Breast epithelium (tissue), 4 donors: ENCODE measurements at regions of chr11 and their contacts with region 1.

Region 1: GRCh38 chr11:38153985-38154384 is 1555.9 kb upstream of the RAG2 start:
- DNase-seq: no peak
- H3K4me3 ChIP-seq: no peak overlapping the region
- H3K27ac ChIP-seq: no peak overlapping the region
- H3K4me1 ChIP-seq: no peaks in the 10 kb centered on the region
- H3K27me3 ChIP-seq: no peaks in the 10 kb centered on the region
- CTCF ChIP-seq: no peak
- POLR2A ChIP-seq: no peak

Region 2: DNA sequence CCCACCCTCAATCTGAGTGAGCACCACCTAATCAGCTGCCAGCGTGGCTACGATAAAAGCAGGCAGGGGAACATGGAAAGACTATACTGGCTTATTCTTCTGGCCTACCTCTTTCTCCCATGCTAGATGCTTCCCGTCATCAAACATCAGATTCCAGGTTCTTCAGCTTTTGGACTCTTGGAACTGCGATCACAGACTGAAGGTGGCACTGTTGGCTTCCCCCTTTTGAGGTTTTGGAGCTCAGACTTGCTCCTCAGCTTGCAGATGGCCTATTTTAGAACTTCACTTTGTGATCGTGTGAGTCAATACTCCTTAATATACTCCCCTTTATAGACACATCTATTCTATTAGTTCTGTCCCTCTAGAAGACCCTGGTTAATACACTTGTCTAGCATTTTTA is 1012.3 kb before region 1 on chr11:
- intact Hi-C with region 1: loop called (anchors 5 kb)
- DNase-seq: no peak
- H3K4me3 ChIP-seq: no peak overlapping the region
- H3K27ac ChIP-seq: no peak overlapping the region
- H3K4me1 ChIP-seq: no peaks in the 10 kb centered on the region
- H3K27me3 ChIP-seq: no peaks in the 10 kb centered on the region
- CTCF ChIP-seq: no peak
- POLR2A ChIP-seq: no peak

Region 3: DNA sequence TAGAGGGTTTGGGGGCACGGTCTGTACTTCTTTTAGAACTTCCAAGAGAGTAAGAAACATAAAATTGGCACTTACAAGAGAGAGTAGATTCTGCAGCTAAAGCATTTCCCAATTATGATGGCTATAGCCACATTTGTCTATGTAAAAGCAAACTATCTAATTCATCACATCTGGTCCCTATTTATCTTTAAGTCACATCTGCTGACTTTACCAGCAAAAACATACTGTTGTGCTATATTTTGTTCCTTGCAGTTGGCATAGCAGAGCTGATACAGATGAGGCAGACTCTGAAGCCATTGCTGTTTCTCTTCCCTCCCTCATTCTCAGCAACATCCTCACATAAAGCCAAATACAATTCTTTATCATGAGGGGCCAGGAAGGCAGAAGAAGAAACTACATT is 22.4 kb before region 1 on chr11:
- intact Hi-C with region 1: no loop called
- DNase-seq: no peak
- H3K4me3 ChIP-seq: no peak overlapping the region
- H3K27ac ChIP-seq: no peak overlapping the region
- H3K4me1 ChIP-seq: no peaks in the 10 kb centered on the region
- H3K27me3 ChIP-seq: no peaks in the 10 kb centered on the region
- CTCF ChIP-seq: no peak
- POLR2A ChIP-seq: no peak